ENCODE measurements at regions of chr3 and their contacts with region 1.

Region 1: DNA sequence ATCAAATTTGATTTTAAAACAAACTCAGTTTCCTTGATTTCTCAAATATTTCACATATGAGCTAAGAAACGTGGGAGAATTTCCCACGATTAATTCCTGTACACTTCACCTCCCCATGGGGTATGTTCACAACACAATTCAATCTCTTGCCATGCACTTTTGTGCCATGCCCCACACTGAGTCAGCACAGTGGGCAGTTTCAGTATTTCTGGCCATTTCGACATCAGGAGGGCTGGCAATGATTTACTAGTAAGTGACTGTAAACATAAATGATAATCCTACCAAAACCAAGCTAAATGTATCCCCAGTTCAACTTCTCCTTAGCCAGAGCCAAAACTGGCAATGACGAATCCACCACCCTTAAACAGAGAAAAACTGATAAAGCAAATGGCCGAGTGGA is 293.6 kb downstream of the FGF12 start:
- DNase-seq: no peak
- ATAC-seq: no peak
- H3K4me3 ChIP-seq: no peak overlapping the region
- H3K27ac ChIP-seq: no peak overlapping the region
- H3K4me1 ChIP-seq: no peaks in the 10 kb centered on the region
- H3K27me3 ChIP-seq: no peaks in the 10 kb centered on the region

Region 2: GRCh38 chr3:191412759-191413158 is 1020.9 kb before region 1 on chr3:
- intact Hi-C with region 1: loop called in 1 of 4 experiments (anchors 10 kb)
- DNase-seq: no peak
- ATAC-seq: no peak
- H3K4me3 ChIP-seq: no peak overlapping the region
- H3K27ac ChIP-seq: no peak overlapping the region
- H3K4me1 ChIP-seq: no peaks in the 10 kb centered on the region
- H3K27me3 ChIP-seq: no peaks in the 10 kb centered on the region

Region 3: DNA sequence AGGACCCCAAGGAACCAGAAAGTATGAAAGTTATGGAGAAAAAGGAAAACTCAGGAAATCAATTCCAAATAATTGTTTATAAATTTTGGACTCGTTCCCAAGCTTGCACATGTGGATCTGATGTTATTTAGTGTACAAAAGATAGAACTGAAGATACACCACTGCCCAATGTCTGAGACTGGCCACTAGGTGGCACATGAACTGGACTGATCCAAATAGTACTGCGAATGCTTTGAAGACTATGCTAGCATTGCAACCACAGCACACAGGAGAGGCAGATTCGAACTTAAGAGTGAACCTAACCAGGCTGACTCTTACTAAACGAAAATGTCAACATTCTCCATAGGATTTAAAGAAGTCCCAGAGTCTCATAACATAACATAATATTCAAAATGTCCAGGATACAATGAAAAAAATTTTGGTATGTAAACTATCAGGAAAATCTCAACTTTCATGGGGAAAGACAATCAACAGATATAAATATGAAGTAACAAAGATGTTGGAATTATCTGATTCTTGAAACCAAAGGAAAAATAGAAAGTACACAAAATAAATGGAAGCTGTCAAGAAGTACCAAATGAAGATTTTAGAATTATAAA is 303.1 kb before region 1 on chr3:
- intact Hi-C with region 1: loop called in 1 of 4 experiments (anchors 5 kb)
- DNase-seq: peak; percentile 32 to 62 (median 36)
- ATAC-seq: peak; percentile 81 to 84
- H3K4me3 ChIP-seq: no peak overlapping the region
- H3K27ac ChIP-seq: no peak overlapping the region
- H3K4me1 ChIP-seq: no peaks in the 10 kb centered on the region
- H3K27me3 ChIP-seq: no peaks in the 10 kb centered on the region

Measured in right cardiac atrium (tissue), 5 donors.